ENCODE measurements at regions of chr15 and their contacts with region 1.

Region 1: DNA sequence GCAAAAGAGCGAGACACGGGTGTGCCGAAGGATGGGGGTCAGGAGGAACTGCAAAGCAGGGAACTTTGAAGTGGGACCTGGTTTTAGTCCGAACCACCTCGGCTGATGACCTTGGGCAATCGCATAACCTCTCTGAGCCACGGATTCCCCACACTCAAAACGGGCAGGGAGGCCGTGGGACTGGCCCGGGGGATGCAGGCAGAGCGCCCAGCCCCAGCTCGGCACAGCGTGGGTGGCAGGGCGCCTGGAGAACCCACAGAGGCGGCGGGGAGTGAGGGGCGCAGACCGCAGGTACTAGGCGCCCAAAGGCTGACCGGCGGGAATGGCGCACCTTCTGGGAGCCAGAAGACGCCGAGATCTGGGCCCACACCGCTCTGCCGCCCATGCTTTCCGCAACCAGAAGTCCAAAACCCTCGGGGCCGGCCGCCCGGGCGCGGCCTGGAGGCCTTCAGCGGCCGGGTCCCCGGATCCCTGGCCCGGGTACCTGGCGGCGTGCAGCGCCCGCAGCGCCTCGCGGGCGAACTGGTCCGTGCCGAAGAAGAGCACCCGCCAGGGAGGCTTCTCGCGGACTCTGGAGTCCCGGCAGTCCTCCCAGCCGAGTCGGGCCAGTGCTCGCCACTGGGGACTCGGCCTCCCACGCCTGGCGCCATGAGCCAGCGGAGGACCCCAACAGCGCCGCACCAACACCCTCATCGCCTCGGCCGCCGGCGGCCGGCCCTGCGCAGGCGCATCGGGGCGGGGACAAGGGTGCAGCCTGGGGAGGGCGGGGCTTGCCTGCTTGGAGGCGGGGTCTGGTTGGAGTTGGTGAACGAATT is at the start of gene MTFMT:
- DNase-seq: peak; percentile 91
- ATAC-seq: peak; percentile 96
- H3K4me3 Mint-ChIP-seq: peak within 1 kb of the TSS; percentile 85
- H3K27ac Mint-ChIP-seq: peak within 1 kb of the TSS; percentile 13
- H3K4me1 Mint-ChIP-seq: peaks cover 23% of the 10 kb centered on the region
- H3K27me3 Mint-ChIP-seq: peaks cover 7% of the 10 kb centered on the region
- CTCF ChIP-seq: no peak
- total RNA-seq, gene MTFMT: 9.8 and 13.5 TPM in 2 replicates

Region 2: DNA sequence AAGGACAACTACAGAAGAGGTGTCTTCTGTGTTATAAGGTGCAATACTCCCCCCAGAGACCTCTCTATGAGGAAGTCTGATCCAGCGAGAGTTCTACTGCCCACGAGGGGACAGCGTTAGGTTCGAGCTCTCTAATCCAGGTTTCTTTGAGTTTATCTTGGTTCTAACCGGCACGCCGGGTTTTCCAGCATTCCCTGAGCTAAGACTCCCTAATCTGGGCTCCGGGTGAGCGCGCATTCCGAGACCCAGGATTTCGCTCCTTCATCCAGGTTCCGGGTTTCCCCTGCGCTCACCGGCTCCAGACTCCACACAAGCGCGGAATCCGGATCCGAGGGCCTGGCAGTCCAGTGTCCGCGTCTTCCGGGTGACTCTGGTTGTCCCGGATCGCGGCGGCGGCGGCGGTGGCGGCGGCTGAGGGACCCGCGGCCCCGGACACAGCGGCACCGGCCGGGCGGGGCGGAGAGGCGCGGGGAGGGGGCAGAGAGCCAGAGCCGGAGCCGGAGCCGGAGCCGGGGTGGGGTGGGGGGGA is 568.9 kb before region 1 on chr15 and contains the start of gene ZNF609:
- CTCF ChIA-PET with region 1: no interaction called
- POLR2A ChIA-PET with region 1: no interaction called
- intact Hi-C with region 1: no loop called
- DNase-seq: peak; percentile 89
- ATAC-seq: peak; percentile 86
- H3K4me3 Mint-ChIP-seq: peak within 1 kb of the TSS; percentile 92
- H3K27ac Mint-ChIP-seq: peak within 1 kb of the TSS; percentile 81
- H3K4me1 Mint-ChIP-seq: peaks cover 67% of the 10 kb centered on the region
- H3K27me3 Mint-ChIP-seq: no peaks in the 10 kb centered on the region
- CTCF ChIP-seq: no peak
- total RNA-seq, gene ZNF609: 25.9 and 28.6 TPM in 2 replicates

Region 3: DNA sequence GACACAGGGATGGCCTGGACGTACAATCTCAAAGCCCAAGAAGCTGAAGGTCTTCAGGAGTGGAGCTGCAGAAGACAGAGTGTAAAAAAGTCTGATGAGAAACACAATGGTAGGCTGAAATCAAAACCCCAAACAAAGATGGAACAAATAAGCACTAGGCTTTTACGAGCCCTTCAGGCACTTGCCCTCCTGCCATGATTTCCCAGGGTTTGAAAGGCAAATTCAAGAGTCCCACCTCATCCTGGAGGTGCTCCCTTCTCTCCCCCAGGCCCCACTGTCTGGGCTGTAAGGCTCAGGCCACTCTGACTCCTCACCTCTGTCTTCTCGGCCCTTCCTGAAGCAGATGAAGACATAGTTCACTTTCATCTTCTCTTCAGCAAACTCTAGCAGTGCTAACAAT is 340.4 kb before region 1 on chr15:
- CTCF ChIA-PET with region 1: no interaction called
- POLR2A ChIA-PET with region 1: interaction called, 13 read pairs
- intact Hi-C with region 1: no loop called
- DNase-seq: no peak
- ATAC-seq: no peak
- H3K4me3 Mint-ChIP-seq: no peak overlapping the region
- H3K27ac Mint-ChIP-seq: no peak overlapping the region
- H3K4me1 Mint-ChIP-seq: peaks cover 8% of the 10 kb centered on the region
- H3K27me3 Mint-ChIP-seq: no peaks in the 10 kb centered on the region
- CTCF ChIP-seq: no peak

Region 4: GRCh38 chr15:65049418-65049840 is 20.3 kb after region 1 on chr15:
- CTCF ChIA-PET with region 1: no interaction called
- POLR2A ChIA-PET with region 1: no interaction called
- intact Hi-C with region 1: loop called (anchors 1 kb)
- DNase-seq: peak; percentile 83
- ATAC-seq: peak; percentile 97
- H3K4me3 Mint-ChIP-seq: peak overlapping the region; percentile 77
- H3K27ac Mint-ChIP-seq: peak overlapping the region; percentile 63
- H3K4me1 Mint-ChIP-seq: peaks cover 19% of the 10 kb centered on the region
- H3K27me3 Mint-ChIP-seq: peaks cover 3% of the 10 kb centered on the region
- CTCF ChIP-seq: no peak

Region 5: DNA sequence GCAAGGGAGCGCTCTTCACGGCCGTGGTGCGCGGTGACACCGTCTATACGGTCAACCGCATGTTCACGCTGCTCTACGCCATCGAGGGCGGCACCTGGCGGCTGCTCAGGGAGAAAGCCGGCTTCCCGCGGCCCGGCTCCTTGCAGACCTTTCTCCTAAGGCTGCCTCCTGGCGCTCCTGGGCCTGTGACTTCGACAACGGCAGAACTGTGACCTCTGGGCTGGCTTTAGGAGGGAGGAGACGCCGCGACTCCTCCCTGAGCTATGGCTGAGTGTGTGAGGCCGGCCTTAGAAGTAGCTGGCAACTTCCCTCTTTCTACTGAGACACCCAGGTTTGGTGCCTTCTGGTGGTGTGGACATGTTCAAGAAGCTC is 48.8 kb after region 1 on chr15:
- CTCF ChIA-PET with region 1: interaction called, 7 read pairs
- POLR2A ChIA-PET with region 1: no interaction called
- intact Hi-C with region 1: loop called (anchors 1 kb)
- DNase-seq: peak; percentile 34
- ATAC-seq: peak; percentile 56
- H3K4me3 Mint-ChIP-seq: peak overlapping the region; percentile 58
- H3K27ac Mint-ChIP-seq: no peak overlapping the region
- H3K4me1 Mint-ChIP-seq: peaks cover 7% of the 10 kb centered on the region
- H3K27me3 Mint-ChIP-seq: peaks cover 50% of the 10 kb centered on the region
- CTCF ChIP-seq: no peak

Region 6: DNA sequence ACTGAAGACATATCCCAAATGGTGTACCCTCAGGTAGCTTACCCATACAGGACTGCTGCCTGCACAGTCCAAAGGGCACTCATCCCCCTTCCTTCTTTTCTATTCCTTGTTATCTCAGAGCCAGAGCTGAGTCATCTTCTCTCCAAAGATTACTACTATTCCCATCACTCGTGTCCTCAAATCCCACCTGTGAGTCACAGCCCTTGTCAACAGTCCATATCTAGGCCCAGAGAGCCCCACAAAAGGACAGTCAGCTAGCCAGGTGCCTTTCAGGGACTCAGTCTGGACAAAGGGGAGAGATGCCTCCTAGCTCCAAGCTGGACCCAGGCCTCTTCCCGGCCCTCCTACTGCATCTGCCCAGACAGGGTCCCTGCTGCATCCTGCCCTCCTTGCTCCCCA is 246.6 kb after region 1 on chr15:
- CTCF ChIA-PET with region 1: no interaction called
- POLR2A ChIA-PET with region 1: no interaction called
- intact Hi-C with region 1: loop called (anchors 1 kb)
- DNase-seq: no peak
- ATAC-seq: no peak
- H3K4me3 Mint-ChIP-seq: no peak overlapping the region
- H3K27ac Mint-ChIP-seq: no peak overlapping the region
- H3K4me1 Mint-ChIP-seq: peaks cover 4% of the 10 kb centered on the region
- H3K27me3 Mint-ChIP-seq: no peaks in the 10 kb centered on the region
- CTCF ChIP-seq: no peak